ENCODE measurements at regions of chr1 and their contacts with region 1.

Region 1: DNA sequence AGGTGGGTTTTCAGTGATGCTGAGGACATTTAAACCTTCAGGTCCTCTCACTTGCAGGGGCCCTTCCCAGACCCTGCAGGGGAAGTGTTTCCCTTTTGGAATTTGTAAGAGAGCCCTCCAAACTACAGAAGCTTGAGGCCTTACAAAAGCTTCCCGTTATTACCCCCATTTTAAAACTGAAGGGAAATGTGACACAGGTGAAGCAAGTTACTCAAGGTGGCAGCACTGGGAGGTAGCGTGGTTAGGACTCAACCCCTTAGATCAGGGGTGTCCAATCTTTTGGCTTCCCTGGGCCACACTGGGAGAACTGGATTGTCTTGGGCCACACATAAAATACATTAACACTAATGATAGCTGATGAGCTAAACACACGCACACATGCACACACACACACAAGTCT is 15.9 kb upstream of the ZC3H12A start:
- DNase-seq: no peak
- ATAC-seq: no peak

Region 2: GRCh38 chr1:37634244-37634991 is 175.9 kb after region 1 on chr1 and contains the start of gene RSPO1:
- intact Hi-C with region 1: no loop called
- DNase-seq: no peak
- ATAC-seq: peak; percentile 29
- total RNA-seq, gene RSPO1: 0.47 TPM

Region 3: DNA sequence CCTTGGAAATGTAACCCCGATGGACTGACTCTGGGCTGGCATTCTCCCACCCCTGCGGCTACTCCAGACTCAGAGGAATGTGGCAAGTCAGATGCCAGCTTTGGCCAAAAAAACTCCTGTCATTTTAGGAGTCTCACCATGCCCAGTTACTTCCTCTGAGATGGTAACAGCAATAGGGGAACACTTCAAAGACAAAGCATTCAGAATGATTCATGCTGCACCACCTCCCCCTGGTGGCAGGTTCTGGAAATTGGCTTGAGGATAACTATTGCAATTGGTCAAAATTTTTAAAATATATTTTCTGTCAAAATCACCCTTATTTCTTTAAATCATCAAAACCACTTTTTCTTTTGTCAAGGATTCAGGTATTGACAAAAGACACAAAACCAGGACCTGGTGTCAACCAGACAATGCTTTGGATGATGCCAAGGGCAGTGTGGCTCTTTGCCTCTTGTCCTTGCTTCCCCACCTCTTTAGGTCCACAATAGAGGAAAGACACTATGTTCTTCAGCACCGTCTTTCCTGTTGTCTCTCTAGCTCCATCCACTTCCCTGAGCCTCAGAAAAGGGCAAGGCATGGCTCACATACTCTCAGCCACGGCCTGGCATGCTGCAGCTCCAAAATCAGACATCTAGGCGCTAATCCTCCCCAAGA is 223.9 kb after region 1 on chr1:
- intact Hi-C with region 1: loop called (anchors 5 kb)
- DNase-seq: peak; percentile 69
- ATAC-seq: peak; percentile 68